ENCODE measurements at regions of chr4 and their contacts with region 1.

Region 1: GRCh38 chr4:70505151-70505748 is 13.1 kb upstream of the AMTN start:
- DNase-seq: peak; percentile 43
- H3K4me3 Mint-ChIP-seq: no peak overlapping the region
- H3K27ac Mint-ChIP-seq: no peak overlapping the region
- H3K4me1 Mint-ChIP-seq: no peaks in the 10 kb centered on the region
- H3K27me3 Mint-ChIP-seq: no peaks in the 10 kb centered on the region

Region 2: DNA sequence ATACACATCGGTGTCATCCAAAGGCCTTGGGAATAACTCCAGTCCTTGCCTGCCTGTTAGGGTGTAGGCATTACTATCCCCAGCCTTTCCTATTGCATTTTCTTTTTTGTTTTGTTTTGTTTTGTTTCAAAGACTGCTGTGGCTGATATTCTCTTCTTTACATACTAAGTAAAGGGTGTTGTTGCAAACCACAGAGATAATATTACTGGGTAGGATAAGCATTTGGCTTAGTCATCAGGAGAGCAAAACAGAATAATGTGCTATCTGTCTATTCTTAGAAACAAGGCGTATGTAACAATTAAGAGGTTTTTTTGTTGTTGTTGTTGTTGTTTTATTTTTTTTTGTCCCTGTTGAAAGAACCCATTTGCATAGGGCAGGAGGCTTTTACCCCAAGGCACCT is 1183.2 kb before region 1 on chr4:
- intact Hi-C with region 1: loop called (anchors 2 kb)
- DNase-seq: no peak
- H3K4me3 Mint-ChIP-seq: no peak overlapping the region
- H3K27ac Mint-ChIP-seq: no peak overlapping the region
- H3K4me1 Mint-ChIP-seq: no peaks in the 10 kb centered on the region
- H3K27me3 Mint-ChIP-seq: no peaks in the 10 kb centered on the region

Region 3: DNA sequence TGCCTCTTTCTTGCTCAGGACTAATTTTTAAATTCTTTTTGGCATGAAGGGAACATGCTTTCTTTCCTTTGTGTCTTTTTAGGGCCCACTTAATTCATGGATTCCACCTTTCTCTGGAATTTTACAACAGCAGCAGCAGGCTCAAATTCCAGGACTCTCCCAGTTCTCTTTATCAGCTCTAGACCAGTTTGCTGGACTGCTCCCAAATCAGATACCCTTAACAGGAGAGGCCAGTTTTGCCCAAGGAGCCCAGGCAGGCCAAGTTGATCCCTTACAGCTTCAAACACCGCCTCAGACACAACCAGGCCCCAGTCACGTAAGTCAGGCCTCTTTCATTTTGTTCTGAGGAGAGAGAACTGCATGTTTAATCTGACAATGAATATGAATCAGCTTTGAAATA is 307.4 kb before region 1 on chr4:
- intact Hi-C with region 1: loop called (anchors 10 kb)
- DNase-seq: no peak
- H3K4me3 Mint-ChIP-seq: no peak overlapping the region
- H3K27ac Mint-ChIP-seq: no peak overlapping the region
- H3K4me1 Mint-ChIP-seq: no peaks in the 10 kb centered on the region
- H3K27me3 Mint-ChIP-seq: peaks cover 3% of the 10 kb centered on the region

Region 4: GRCh38 chr4:70556856-70557255 is 51.6 kb after region 1 on chr4:
- intact Hi-C with region 1: no loop called
- DNase-seq: no peak
- H3K4me3 Mint-ChIP-seq: no peak overlapping the region
- H3K27ac Mint-ChIP-seq: no peak overlapping the region
- H3K4me1 Mint-ChIP-seq: no peaks in the 10 kb centered on the region
- H3K27me3 Mint-ChIP-seq: peaks cover 3% of the 10 kb centered on the region